Common myeloid progenitor, CD34-positive (primary cell): ENCODE measurements at regions of chr7 and their contacts with region 1.

Region 1: DNA sequence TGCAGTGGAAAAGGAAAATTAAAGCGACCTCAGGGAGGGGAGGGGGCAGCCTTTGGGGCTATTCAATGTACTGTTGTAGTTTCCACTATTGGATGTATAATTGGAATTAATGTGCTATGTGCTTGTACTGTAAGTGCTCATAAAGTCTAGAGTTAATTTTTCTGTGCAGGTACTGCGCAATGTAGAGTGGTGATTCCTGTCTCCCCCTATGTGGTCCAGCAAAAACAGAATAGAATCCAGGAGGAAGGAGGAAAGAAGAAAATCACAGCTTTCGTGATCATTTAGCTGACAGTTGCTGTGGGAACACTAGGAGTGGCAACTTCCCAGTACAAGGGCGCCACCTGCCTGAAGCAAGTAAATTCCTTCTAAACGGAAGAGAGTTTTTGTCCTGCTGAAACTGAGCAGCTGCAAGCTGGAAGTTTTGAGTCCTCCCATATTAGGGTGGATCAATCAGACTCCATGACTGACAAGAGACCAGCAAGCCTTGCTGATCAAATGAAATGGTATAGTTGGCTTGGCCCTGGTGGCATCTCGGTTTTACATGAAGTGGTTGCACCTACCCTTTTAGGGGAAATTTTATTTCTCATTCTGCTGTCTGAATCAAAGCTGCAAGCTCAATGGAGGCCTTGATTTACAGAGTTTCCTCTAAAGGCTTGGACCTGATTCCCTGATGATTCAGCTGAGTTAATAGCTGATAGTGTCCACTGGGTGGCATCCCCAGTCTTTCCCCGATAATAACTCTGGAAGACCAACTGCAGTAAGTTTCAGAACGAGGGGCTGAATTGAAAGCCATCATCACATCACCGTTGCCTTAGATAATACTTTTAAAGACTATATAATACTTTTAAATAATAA is 299.8 kb downstream of the HGF start:
- DNase-seq: peak; percentile 53 to 67 (median 60)
- H3K4me3 ChIP-seq: no peak overlapping the region
- H3K27ac ChIP-seq: no peak overlapping the region
- H3K4me1 ChIP-seq: peaks cover 0 to 4% (median 0%) of the 10 kb centered on the region in 4 experiments
- H3K27me3 ChIP-seq: no peaks in the 10 kb centered on the region

Region 2: GRCh38 chr7:80699045-80699638 is 771.0 kb before region 1 on chr7:
- CTCF ChIA-PET with region 1: interaction called, 60 read pairs
- POLR2A ChIA-PET with region 1: no interaction called
- DNase-seq: peak; percentile 48 to 74 (median 62)
- H3K4me3 ChIP-seq: no peak overlapping the region
- H3K27ac ChIP-seq: no peak overlapping the region
- H3K4me1 ChIP-seq: no peaks in the 10 kb centered on the region
- H3K27me3 ChIP-seq: no peaks in the 10 kb centered on the region

Region 3: GRCh38 chr7:80918909-80919662 is 551.0 kb before region 1 on chr7 and contains the start of gene SEMA3C:
- CTCF ChIA-PET with region 1: interaction called, 18 read pairs
- POLR2A ChIA-PET with region 1: no interaction called
- DNase-seq: peak; percentile 72 to 85 (median 79)
- H3K4me3 ChIP-seq: peak within 1 kb of the TSS; percentile 52 to 96 (median 83)
- H3K27ac ChIP-seq: no peak within 1 kb of the TSS
- H3K4me1 ChIP-seq: peaks cover 7 to 29% (median 20%) of the 10 kb centered on the region in 4 experiments
- H3K27me3 ChIP-seq: no peaks in the 10 kb centered on the region

Region 4: GRCh38 chr7:81457852-81458522 is 12.1 kb before region 1 on chr7:
- CTCF ChIA-PET with region 1: interaction called, 31 read pairs
- POLR2A ChIA-PET with region 1: no interaction called
- DNase-seq: peak in 2 of 3 donors; percentile 39 to 42
- H3K4me3 ChIP-seq: no peak overlapping the region
- H3K27ac ChIP-seq: no peak overlapping the region
- H3K4me1 ChIP-seq: peaks cover 3 to 18% (median 13%) of the 10 kb centered on the region in 4 experiments
- H3K27me3 ChIP-seq: no peaks in the 10 kb centered on the region

Region 5: DNA sequence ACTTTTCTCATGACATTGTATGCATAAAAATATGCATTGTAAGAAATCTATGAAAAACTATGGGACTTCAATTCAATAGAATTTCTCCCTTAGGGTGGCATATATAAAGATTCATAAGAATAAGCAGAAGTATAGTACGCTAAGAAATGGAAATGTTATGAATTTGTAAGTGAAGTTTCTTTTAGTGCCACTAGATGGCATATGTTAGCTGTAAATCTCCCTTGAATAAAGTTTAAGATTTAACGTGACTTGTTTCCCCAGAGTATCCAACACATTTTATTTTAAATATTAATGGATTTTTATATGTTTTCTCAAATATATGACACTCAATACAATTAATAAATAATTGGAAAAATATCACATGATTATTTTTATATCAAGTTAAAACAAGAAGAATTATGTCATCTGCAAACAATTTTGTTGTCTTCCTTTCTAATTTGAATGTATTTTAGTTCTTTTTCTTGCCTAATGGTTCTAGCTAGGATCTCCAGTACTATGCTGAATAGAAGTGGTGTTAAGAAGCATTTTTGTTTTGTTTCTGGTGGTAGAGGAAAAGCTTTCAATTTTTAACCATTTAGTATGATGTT is 12.6 kb after region 1 on chr7:
- CTCF ChIA-PET with region 1: interaction called, 11 read pairs
- POLR2A ChIA-PET with region 1: no interaction called
- DNase-seq: peak; percentile 28 to 63 (median 63)
- H3K4me3 ChIP-seq: no peak overlapping the region
- H3K27ac ChIP-seq: no peak overlapping the region
- H3K4me1 ChIP-seq: no peaks in the 10 kb centered on the region
- H3K27me3 ChIP-seq: no peaks in the 10 kb centered on the region